CD8-positive, alpha-beta memory T cell (primary cell): ENCODE measurements at regions of chr1 and their contacts with region 1.

Region 1: DNA sequence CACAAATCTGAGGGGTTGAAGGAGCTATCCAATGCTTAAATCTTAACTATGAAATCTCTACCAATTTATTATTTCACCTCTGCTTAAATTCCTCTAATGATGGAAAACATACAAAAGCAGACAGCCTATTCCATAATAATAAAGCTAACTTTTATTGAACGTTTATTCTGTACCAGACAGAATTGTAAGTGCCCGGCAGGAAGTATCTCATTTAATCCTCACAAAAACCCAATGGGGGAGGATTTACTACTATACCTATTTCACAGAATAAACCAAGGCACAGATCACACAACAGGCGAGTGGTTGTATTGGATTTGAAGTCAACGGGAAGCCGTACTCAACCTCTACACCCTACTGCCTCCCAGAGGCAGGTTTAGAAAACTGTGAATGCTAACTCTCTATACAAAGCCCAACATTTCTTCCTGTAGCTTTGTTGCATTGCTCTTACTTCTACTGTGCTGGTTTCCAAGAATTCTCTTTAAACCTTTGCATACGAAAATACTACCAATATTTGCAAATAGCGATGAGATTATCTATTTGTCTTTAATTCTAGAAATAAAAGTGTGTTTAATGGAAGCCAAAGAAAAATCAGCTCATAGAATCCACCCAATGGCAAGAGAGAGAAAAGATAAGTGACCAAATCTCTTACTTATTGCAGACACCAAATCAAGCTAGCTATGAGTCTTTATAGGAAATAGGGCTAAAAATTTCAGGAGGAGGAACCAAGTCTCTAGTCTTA is 33.5 kb upstream of the C1orf53 start:
- DNase-seq: peak; percentile 3 to 51 (median 36)
- H3K4me3 ChIP-seq: no peak overlapping the region
- H3K4me3 Mint-ChIP-seq: no peak overlapping the region
- H3K27ac ChIP-seq: no peak overlapping the region
- H3K27ac Mint-ChIP-seq: no peak overlapping the region
- H3K4me1 ChIP-seq: no peaks in the 10 kb centered on the region
- H3K4me1 Mint-ChIP-seq: peaks cover 0 to 6% (median 2%) of the 10 kb centered on the region in 3 donors
- H3K27me3 ChIP-seq: no peaks in the 10 kb centered on the region
- H3K27me3 Mint-ChIP-seq: peaks cover 1 to 3% of the 10 kb centered on the region in 2 donors

Region 2: DNA sequence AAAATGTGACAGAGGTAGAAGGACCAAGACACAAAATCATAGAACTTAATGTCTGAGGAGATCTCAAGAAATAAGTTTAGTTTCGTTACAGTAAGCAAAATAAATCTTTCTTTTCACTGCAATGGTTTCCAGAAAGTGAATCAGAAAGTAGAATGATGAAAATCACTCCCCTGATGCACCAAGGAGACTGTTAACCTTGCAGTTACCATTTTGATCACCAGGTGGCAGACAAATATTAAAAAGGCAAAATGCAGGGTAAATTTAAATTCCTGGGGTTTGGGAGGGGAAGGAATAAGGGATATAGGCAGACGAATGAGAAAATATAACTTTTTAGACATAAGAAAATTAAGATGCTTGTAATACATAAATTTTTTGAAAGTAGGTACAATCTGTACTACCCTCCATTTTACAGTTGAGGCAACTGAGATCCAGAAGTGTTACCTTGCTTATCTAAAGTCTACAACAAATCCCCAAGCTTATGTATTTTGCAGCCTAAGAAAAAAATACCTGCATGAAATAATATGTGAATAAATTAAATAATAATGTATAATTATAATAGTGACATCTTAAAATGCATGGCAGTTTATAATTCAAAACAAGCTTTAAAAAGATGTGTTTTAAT is 347.7 kb before region 1 on chr1:
- CTCF ChIA-PET with region 1: interaction called, 10 read pairs
- POLR2A ChIA-PET with region 1: no interaction called
- DNase-seq: peak in 2 of 5 donors; percentile 4 to 7
- H3K4me3 ChIP-seq: no peak overlapping the region
- H3K4me3 Mint-ChIP-seq: no peak overlapping the region
- H3K27ac ChIP-seq: no peak overlapping the region
- H3K27ac Mint-ChIP-seq: no peak overlapping the region
- H3K4me1 ChIP-seq: no peaks in the 10 kb centered on the region
- H3K4me1 Mint-ChIP-seq: peaks cover 0 to 4% (median 0%) of the 10 kb centered on the region in 3 donors
- H3K27me3 ChIP-seq: no peaks in the 10 kb centered on the region
- H3K27me3 Mint-ChIP-seq: no peaks in the 10 kb centered on the region

Region 3: GRCh38 chr1:197614916-197615692 is 253.8 kb before region 1 on chr1:
- CTCF ChIA-PET with region 1: interaction called, 17 read pairs
- POLR2A ChIA-PET with region 1: no interaction called
- DNase-seq: peak in 1 of 5 donors; percentile 8
- H3K4me3 ChIP-seq: no peak overlapping the region
- H3K4me3 Mint-ChIP-seq: no peak overlapping the region
- H3K27ac ChIP-seq: no peak overlapping the region
- H3K27ac Mint-ChIP-seq: no peak overlapping the region
- H3K4me1 ChIP-seq: no peaks in the 10 kb centered on the region
- H3K4me1 Mint-ChIP-seq: no peaks in the 10 kb centered on the region
- H3K27me3 ChIP-seq: no peaks in the 10 kb centered on the region
- H3K27me3 Mint-ChIP-seq: no peaks in the 10 kb centered on the region